Activated CD4-positive, alpha-beta T cell treated with anti-CD3 and anti-CD28 coated beads for 36 hours (primary cell): ENCODE measurements at regions of chr18 and their contacts with region 1.

Region 1: GRCh38 chr18:8835521-8835953 is 130.2 kb downstream of the MTCL1 start:
- DNase-seq: no peak
- ATAC-seq: no peak
- H3K4me3 Mint-ChIP-seq: no peak overlapping the region
- H3K27ac Mint-ChIP-seq: no peak overlapping the region
- H3K4me1 Mint-ChIP-seq: no peaks in the 10 kb centered on the region
- H3K27me3 Mint-ChIP-seq: peaks cover 5% of the 10 kb centered on the region

Region 2: DNA sequence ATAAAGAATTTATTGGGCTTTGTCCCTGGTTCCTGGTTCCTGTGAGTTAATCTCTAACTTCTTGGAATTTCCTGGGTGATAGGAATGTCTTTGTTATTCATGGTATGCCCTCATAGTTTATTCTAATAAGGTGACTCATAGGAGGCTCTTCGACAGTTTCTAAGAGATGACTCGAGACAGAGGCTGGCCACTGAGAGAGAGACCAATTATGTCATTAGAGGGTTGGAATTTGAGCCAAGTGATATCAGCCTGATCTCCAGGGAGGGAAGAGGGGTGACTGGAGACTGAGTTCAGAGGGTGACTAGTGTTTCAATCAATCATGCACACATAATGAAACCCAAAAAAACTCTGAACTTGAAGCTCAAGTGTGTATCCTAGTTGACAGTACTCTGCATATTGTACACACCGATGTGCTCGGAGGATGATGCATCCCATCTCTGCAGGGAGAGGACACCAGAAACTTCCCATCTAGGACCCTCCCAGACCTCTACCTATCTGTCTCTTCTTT is 55.5 kb after region 1 on chr18:
- CTCF ChIA-PET with region 1: no interaction called
- POLR2A ChIA-PET with region 1: no interaction called
- intact Hi-C with region 1: loop called in 1 of 2 experiments (anchors 10 kb)
- DNase-seq: no peak
- ATAC-seq: no peak
- H3K4me3 Mint-ChIP-seq: no peak overlapping the region
- H3K27ac Mint-ChIP-seq: no peak overlapping the region
- H3K4me1 Mint-ChIP-seq: no peaks in the 10 kb centered on the region
- H3K27me3 Mint-ChIP-seq: peaks cover 2% of the 10 kb centered on the region

Region 3: DNA sequence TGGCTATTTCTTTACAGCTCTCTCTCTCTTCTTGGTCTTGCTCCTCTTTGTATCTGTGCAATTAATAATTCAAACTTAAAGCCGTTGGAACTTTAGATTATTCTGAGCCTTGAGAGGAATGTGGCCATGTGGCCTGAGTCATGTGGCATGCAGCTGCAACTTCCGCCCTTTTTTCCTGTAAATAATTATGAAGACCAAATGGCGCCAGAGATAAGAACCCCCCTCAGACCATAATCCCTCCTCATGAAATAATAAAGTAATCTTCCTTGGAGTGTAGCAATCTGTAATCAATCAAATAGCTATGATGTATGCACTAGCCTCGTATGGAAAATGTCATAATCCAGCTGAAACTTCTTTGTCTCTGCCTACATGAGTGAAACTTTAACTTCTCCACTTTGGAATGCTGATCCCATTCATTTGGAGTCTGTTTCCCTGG is 485.5 kb after region 1 on chr18:
- CTCF ChIA-PET with region 1: no interaction called
- POLR2A ChIA-PET with region 1: no interaction called
- intact Hi-C with region 1: no loop called
- DNase-seq: no peak
- ATAC-seq: no peak
- H3K4me3 Mint-ChIP-seq: no peak overlapping the region
- H3K27ac Mint-ChIP-seq: no peak overlapping the region
- H3K4me1 Mint-ChIP-seq: no peaks in the 10 kb centered on the region
- H3K27me3 Mint-ChIP-seq: peaks cover 14% of the 10 kb centered on the region